Activated naive CD4-positive, alpha-beta T cell treated with anti-CD3 and anti-CD28 coated beads for 36 hours (primary cell): ENCODE measurements at regions of chr3 and their contacts with region 1.

Region 1: DNA sequence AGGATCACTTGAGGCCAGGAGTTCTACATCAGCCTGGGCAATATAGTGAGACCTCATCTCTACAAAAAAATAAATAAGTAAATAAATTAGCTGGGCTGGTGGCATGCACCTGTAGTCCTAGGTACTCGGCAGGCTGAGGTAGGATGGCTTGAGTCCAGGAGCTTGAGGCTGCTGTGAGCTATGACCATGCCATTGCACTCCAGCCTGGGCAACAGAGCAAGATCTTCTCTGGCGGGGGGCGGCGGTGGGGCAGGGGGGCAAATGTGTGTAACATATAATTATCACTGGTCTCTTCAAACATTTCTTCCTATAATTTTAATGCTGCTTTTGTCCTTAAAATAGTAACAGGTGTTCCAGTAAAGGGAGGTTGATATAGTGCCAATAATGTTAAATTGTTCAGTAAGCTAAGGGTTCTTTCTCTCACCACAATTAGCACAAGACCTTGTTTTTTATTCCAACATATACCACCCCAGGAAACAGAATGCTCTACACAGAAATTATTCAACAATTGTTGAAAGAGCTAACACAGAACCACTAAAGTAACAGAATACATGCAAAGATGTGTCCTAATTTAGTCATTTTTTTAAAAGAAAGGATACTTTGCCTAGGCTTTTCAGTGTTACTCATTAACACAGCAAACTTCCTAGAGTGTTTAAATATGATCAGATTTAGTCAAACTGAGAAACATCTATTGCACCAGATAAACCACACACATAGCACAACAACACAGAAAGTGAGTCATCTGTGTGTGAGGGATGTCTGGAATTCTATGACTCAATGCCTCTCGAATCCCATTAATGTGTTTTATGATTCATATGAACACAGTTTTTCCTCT is 29.1 kb downstream of the ANKRD28 start:
- DNase-seq: peak; percentile 7
- H3K4me3 Mint-ChIP-seq: no peak overlapping the region
- H3K27ac Mint-ChIP-seq: peak overlapping the region; percentile 11
- H3K4me1 Mint-ChIP-seq: peaks cover 40% of the 10 kb centered on the region
- H3K27me3 Mint-ChIP-seq: no peaks in the 10 kb centered on the region

Region 2: GRCh38 chr3:14335774-14336756 is 1432.6 kb before region 1 on chr3:
- CTCF ChIA-PET with region 1: no interaction called
- intact Hi-C with region 1: no loop called
- DNase-seq: no peak
- H3K4me3 Mint-ChIP-seq: no peak overlapping the region
- H3K27ac Mint-ChIP-seq: no peak overlapping the region
- H3K4me1 Mint-ChIP-seq: peaks cover 2% of the 10 kb centered on the region
- H3K27me3 Mint-ChIP-seq: no peaks in the 10 kb centered on the region

Region 3: GRCh38 chr3:15726043-15726442 is 42.6 kb before region 1 on chr3:
- CTCF ChIA-PET with region 1: no interaction called
- intact Hi-C with region 1: loop called (anchors 1 kb)
- DNase-seq: no peak
- H3K4me3 Mint-ChIP-seq: no peak overlapping the region
- H3K27ac Mint-ChIP-seq: peak overlapping the region; percentile 36
- H3K4me1 Mint-ChIP-seq: peaks cover 10% of the 10 kb centered on the region
- H3K27me3 Mint-ChIP-seq: no peaks in the 10 kb centered on the region

Region 4: DNA sequence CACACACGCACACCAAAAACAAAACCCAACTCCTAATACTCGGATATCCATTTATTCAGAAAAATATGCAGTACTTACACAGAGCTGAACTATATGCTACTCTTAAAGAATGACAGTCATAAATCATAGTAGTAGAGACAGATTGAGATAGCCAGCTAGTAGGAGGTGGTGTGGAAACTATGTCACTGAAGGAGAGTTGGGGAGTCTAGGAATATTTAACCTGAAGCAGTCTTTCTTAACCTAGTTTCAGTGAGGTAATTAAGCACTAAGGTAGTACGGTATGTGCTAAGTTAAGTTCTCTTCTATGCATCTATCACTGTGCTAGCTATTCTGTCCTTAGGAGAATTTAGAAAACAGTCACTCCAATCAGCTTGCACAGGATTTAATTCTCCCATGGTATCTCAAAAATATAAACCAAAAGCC is 25.0 kb before region 1 on chr3:
- CTCF ChIA-PET with region 1: no interaction called
- intact Hi-C with region 1: loop called (anchors 1 kb)
- DNase-seq: no peak
- H3K4me3 Mint-ChIP-seq: no peak overlapping the region
- H3K27ac Mint-ChIP-seq: no peak overlapping the region
- H3K4me1 Mint-ChIP-seq: peaks cover 37% of the 10 kb centered on the region
- H3K27me3 Mint-ChIP-seq: no peaks in the 10 kb centered on the region